ENCODE measurements at regions of chr5 and their contacts with region 1.

Region 1: DNA sequence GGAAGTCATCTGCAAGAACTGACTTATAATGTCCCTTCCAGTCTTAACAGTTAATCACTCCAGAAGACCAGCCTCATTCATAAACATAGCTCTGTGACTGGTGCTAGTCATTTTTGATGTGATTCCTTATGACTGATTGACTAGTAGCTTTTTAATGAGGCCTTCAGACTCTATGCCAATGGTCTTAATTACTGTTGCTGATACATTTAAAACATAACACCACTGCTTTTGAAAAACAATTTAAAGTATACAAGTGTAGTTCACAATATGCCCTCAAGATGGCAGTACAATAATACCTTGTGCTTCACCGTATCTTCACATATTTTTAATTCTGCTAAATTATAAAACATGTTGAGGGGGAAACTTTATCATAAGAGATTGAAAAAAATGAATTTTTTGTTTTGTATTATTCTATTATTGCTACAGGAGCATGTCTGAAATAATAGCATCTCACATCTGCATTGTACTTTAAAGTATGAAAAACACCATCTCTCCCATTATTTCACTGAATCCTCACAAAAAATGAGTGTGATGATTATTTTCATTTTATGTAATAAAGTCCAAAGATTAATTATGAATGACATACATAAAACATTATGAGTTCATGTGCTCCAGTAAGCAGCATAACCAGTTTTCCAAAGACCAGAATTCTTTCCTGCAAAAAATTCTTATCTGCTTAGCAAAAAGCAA is 55.2 kb upstream of the SHISAL2B start:
- DNase-seq: peak; percentile 60

Region 2: DNA sequence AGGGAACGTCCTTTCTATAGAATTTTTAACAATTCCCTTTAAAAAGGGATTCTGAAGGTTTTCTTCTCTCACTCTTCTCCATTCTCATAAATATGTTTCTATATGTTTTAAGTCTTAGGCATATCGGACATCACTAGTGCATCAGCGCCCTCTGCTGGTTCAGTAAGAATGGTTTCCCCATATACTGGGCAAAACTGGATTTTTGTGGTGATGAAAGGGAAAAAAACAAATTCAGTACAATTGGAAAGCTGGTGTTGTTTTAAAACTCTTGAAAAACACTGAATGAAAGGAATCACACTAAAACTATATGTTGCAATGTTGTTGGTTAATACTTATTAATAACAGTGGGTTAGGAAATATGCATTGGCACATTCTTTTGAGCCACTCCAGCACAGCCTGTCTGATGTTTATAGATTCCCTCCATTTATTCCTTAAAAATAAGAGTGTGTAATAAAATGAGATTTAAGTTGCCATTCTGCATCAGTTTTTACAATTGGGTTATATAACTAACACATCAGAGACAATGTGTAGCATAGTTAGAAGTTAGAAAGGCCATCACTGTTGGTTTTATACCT is 149.4 kb after region 1 on chr5:
- in situ Hi-C with region 1: loop called (anchors 25 kb)
- DNase-seq: peak; percentile 75